GM13977 (cell line): ENCODE measurements at regions of chr1 and their contacts with region 1.

Region 1: DNA sequence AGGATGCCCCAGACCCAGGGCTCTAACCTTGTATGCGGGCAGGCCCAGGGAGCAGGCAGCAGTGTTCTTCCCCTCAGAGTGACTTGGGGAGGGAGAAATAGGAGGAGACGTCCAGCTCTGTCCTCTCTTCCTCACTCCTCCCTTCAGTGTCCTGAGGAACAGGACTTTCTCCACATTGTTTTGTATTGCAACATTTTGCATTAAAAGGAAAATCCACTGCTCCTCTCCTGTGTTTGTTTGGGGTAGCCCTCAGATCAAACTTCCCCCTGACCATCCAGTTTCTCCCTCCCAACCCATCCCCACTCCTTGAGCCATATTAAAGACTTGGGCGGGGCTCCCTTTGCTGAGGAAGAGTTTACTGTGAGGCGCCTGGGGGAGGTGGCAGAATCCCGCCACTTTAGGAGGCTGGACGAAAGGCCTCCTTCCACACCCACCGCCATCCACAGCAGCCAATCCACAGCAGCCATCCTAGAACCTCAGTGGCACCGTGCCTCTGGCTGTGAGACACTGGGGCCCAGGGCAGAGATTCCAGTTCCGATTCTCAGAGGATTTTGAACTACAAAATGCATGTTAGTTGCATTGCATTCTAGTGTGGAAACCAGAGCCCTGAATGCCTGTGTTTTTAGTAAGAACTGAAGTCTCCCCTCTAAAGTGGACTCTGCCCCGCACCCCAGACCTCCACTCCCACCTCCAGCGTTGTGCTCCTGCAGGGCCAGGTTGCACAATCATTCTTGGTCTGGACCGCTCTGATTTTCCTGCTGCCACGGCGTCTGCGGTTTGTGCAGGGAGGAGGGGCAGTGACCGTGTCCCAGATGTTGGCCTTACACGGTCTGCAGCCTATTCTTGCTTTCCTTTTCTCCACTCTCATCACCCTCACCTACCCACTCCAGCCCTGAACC is 3.0 kb downstream of the OLFML3 start:
- DNase-seq: no peak
- CTCF ChIP-seq: no peak

Region 2: GRCh38 chr1:114274621-114275317 is 292.5 kb after region 1 on chr1:
- in situ Hi-C with region 1: loop called (anchors 10 kb)
- DNase-seq: no peak
- CTCF ChIP-seq: no peak